ENCODE measurements at regions of chr10 and their contacts with region 1.

Region 1: GRCh38 chr10:71285180-71285545 is 33.9 kb upstream of the SLC29A3 start:
- DNase-seq: peak; percentile 56
- ATAC-seq: peak; percentile 61 to 64

Region 2: GRCh38 chr10:70903262-70903921 is 381.8 kb before region 1 on chr10:
- intact Hi-C with region 1: loop called (anchors 2 to 5 kb)
- DNase-seq: peak; percentile 71
- ATAC-seq: peak; percentile 51 to 79

Region 3: DNA sequence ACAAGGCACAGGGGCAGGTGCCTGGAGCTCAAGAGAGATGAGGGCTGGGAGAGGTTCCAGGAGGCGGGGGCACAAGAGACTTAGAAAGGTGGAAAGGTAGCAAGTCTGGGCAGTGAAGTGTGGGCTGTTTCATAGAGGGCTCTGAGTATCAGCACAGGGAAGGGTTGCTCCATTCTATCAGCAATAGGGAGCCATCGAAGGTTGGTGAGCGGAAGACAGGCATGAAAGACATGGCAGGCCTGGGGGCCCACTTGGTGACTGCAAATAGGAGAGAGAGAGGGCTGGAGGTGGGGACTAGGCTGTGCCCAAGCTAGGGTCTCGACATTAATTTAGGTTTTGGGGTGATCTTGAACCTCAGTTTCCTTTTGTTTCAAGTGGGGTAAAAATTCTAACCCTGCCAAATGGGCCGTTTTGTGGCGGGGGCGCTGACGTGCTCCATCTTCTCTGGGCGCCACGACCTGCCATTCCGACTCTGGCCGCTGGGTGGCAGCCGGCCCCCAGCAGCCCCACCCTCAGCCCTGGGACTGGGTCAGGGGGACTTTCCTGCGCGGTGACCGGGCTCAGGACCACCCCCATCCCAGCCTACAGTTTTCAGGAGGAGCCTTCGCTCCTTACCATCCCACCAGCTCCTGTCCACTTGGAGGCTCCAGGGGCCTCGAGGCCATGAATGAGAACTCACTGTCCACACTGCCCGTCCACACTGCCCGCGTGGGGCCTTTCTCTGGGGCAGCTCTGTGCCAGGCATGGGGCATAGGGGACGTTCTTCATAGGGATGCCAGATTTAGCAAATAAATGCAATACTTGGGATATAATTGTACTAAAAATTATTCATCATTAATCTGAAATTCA is 359.6 kb before region 1 on chr10:
- intact Hi-C with region 1: loop called (anchors 2 to 5 kb)
- DNase-seq: peak; percentile 54
- ATAC-seq: peak; percentile 80 to 83

Region 4: DNA sequence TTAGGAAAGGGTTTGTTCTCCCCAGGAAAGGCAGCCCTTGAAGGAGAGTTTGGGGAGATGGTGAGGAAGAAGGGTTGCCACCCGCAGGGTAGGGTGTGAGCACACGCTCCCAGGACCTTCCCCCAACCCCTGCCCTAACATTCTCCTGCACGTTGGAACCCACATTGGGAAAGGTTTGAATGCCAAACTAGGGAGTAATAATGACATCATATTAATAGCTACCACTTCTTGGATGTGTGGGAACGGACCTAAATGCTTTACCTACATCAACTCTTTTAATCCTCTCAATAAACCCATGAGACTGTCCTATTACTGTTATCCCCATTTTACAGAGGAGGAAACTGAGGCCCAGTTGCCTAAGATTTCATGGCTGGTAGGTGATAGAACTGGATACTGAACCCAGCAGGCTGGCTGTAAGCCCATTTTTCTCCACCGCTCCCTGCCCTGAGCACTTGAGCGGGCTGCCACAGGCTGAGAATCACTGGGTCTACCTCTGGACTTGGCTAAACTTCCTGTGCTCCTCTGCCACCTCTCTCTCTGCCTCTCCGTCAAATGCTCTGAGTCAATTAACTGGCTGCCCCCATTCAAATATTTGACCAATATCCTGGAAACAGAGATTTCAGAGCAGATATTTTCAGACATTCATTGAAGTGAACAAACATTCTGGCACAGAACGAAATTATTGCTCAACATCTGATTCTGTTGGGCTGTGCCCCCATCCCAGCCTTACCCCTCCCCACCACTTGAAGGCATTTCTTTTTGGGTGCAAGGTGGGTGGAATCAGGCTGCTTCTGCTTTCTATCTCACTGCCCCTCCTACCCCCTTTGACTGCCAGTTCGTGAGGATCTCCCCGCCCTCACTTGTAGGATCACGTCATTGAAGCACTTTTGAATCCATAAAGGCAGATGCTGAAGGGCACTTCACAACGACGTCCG is 304.7 kb after region 1 on chr10:
- intact Hi-C with region 1: no loop called
- DNase-seq: no peak
- ATAC-seq: peak in 1 of 2 donors; percentile 54